ENCODE measurements at regions of chr2 and their contacts with region 1.

Region 1: GRCh38 chr2:229586746-229587705 is 127.3 kb downstream of the DNER start:
- DNase-seq: peak; percentile 78
- H3K4me3 ChIP-seq: no peak overlapping the region
- H3K27ac ChIP-seq: no peak overlapping the region
- H3K4me1 ChIP-seq: no peaks in the 10 kb centered on the region
- H3K27me3 ChIP-seq: no peaks in the 10 kb centered on the region
- CTCF ChIP-seq: peak; percentile 86

Region 2: GRCh38 chr2:228689053-228689452 is 898.0 kb before region 1 on chr2:
- CTCF ChIA-PET with region 1: no interaction called
- POLR2A ChIA-PET with region 1: no interaction called
- intact Hi-C with region 1: loop called (anchors 5 kb)
- DNase-seq: peak; percentile 70
- H3K4me3 ChIP-seq: no peak overlapping the region
- H3K27ac ChIP-seq: no peak overlapping the region
- H3K4me1 ChIP-seq: peaks cover 5% of the 10 kb centered on the region
- H3K27me3 ChIP-seq: no peaks in the 10 kb centered on the region
- CTCF ChIP-seq: peak; percentile 59

Region 3: GRCh38 chr2:229133155-229133772 is 453.8 kb before region 1 on chr2:
- CTCF ChIA-PET with region 1: no interaction called
- POLR2A ChIA-PET with region 1: no interaction called
- intact Hi-C with region 1: loop called (anchors 5 kb)
- DNase-seq: peak; percentile 57
- H3K4me3 ChIP-seq: no peak overlapping the region
- H3K27ac ChIP-seq: no peak overlapping the region
- H3K4me1 ChIP-seq: no peaks in the 10 kb centered on the region
- H3K27me3 ChIP-seq: no peaks in the 10 kb centered on the region
- CTCF ChIP-seq: peak; percentile 64

Region 4: GRCh38 chr2:229342376-229342775 is 244.7 kb before region 1 on chr2:
- CTCF ChIA-PET with region 1: no interaction called
- POLR2A ChIA-PET with region 1: no interaction called
- intact Hi-C with region 1: loop called (anchors 2 kb)
- DNase-seq: peak; percentile 37
- H3K4me3 ChIP-seq: no peak overlapping the region
- H3K27ac ChIP-seq: no peak overlapping the region
- H3K4me1 ChIP-seq: peaks cover 9% of the 10 kb centered on the region
- H3K27me3 ChIP-seq: no peaks in the 10 kb centered on the region
- CTCF ChIP-seq: peak; percentile 72

Region 5: DNA sequence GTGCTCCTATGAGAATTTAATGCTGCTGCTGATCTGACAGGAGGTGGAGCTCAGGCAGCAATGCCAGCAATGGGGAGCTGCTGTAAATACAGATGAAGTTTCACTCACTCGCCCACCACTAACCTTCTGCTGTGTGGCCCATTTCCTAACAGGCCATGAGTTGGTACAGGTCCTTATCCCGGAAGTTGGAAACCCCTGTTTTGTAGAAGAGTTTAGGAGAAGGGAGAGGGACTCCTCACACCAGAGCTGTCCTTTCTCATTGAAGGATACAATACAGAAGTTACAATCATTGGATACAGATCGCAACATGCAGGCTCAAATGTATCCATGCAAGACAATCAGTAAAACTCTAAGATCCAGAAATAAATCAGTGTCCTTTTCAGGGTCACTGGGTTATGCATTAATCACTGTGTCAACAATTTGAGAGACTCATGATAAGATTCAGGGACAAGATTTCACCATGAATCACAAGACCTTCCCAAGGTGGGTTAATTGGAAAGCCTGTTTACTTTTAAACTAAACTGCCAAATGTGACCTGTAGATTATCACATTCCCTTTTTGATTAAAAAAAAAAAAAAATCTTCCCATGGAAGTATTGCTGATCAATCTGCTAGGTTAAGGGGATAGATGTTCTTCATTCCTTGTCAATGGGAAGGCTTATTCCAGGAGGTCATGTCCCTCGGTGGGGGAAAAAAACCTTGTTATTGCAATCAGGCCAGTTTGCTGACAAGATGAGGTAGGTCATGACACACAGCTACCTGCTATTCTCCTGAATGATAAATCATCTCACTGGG is 926.1 kb after region 1 on chr2:
- CTCF ChIA-PET with region 1: no interaction called
- POLR2A ChIA-PET with region 1: no interaction called
- intact Hi-C with region 1: no loop called
- DNase-seq: no peak
- H3K4me3 ChIP-seq: no peak overlapping the region
- H3K27ac ChIP-seq: no peak overlapping the region
- H3K4me1 ChIP-seq: no peaks in the 10 kb centered on the region
- H3K27me3 ChIP-seq: no peaks in the 10 kb centered on the region
- CTCF ChIP-seq: no peak